CD8-positive, alpha-beta memory T cell (primary cell): ENCODE measurements at regions of chr13 and their contacts with region 1.

Region 1: DNA sequence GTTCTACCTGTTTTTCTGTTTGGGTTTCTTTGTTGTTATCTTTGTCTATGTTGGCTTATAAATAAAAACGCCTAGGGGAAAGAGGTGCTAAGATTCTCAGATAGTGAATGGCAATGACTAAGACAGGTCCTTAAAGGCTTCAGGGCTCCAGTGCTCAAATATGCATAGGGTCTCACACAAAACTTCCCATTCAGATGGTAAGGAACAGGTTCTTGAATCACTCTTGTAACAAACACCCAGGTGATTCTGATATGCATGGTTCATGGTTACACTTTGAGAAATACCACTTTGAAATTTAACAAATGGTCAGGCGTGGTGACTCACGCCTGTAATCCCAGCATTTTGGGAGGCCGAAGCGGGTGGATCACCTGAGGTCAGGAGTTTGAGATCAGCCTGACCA is 17.1 kb downstream of the NUDT15 start:
- DNase-seq: no peak
- H3K4me3 ChIP-seq: no peak overlapping the region
- H3K4me3 Mint-ChIP-seq: no peak overlapping the region
- H3K27ac ChIP-seq: no peak overlapping the region
- H3K27ac Mint-ChIP-seq: no peak overlapping the region
- H3K4me1 ChIP-seq: no peaks in the 10 kb centered on the region
- H3K4me1 Mint-ChIP-seq: peaks cover 0 to 4% (median 2%) of the 10 kb centered on the region in 3 donors
- H3K27me3 ChIP-seq: no peaks in the 10 kb centered on the region
- H3K27me3 Mint-ChIP-seq: no peaks in the 10 kb centered on the region

Region 2: GRCh38 chr13:48037346-48038173 is 17.0 kb before region 1 on chr13 and contains the start of gene NUDT15:
- CTCF ChIA-PET with region 1: interaction called, 27 read pairs
- POLR2A ChIA-PET with region 1: no interaction called
- DNase-seq: peak; percentile 92 to 97 (median 96)
- H3K4me3 ChIP-seq: peak within 1 kb of the TSS; percentile 87
- H3K4me3 Mint-ChIP-seq: peak within 1 kb of the TSS; percentile 92 to 97 (median 95)
- H3K27ac ChIP-seq: peak within 1 kb of the TSS; percentile 98
- H3K27ac Mint-ChIP-seq: peak within 1 kb of the TSS; percentile 94 to 100 (median 98)
- H3K4me1 ChIP-seq: peaks cover 18% of the 10 kb centered on the region
- H3K4me1 Mint-ChIP-seq: peaks cover 24 to 42% (median 35%) of the 10 kb centered on the region in 3 donors
- H3K27me3 ChIP-seq: no peaks in the 10 kb centered on the region
- H3K27me3 Mint-ChIP-seq: peaks cover 0 to 4% of the 10 kb centered on the region in 2 donors
- total RNA-seq, gene NUDT15: 23.9 to 24.0 TPM

Region 3: DNA sequence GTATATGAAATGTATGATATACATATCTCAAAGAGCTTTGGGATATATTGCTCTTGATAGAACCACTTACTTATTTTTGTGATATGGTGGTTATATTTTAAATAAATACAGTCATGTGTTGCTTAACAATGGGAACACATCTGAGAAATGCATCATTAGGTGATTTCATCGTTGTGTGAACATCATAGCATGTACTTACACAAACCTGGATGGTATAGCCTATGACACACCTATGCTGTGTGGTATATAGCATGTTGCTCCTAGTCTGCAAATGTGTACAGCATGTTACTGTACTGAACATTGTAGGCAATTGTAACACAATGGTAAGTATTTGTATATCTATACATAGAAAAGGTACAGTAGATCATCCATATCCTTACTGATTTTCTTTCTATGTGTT is 256.6 kb after region 1 on chr13:
- CTCF ChIA-PET with region 1: no interaction called
- POLR2A ChIA-PET with region 1: no interaction called
- DNase-seq: no peak
- H3K4me3 ChIP-seq: no peak overlapping the region
- H3K4me3 Mint-ChIP-seq: no peak overlapping the region
- H3K27ac ChIP-seq: no peak overlapping the region
- H3K27ac Mint-ChIP-seq: no peak overlapping the region
- H3K4me1 ChIP-seq: peaks cover 8% of the 10 kb centered on the region
- H3K4me1 Mint-ChIP-seq: peaks cover 40 to 73% (median 63%) of the 10 kb centered on the region in 3 donors
- H3K27me3 ChIP-seq: no peaks in the 10 kb centered on the region
- H3K27me3 Mint-ChIP-seq: no peaks in the 10 kb centered on the region